GM10248 (cell line): ENCODE measurements at regions of chr12 and their contacts with region 1.

Region 1: DNA sequence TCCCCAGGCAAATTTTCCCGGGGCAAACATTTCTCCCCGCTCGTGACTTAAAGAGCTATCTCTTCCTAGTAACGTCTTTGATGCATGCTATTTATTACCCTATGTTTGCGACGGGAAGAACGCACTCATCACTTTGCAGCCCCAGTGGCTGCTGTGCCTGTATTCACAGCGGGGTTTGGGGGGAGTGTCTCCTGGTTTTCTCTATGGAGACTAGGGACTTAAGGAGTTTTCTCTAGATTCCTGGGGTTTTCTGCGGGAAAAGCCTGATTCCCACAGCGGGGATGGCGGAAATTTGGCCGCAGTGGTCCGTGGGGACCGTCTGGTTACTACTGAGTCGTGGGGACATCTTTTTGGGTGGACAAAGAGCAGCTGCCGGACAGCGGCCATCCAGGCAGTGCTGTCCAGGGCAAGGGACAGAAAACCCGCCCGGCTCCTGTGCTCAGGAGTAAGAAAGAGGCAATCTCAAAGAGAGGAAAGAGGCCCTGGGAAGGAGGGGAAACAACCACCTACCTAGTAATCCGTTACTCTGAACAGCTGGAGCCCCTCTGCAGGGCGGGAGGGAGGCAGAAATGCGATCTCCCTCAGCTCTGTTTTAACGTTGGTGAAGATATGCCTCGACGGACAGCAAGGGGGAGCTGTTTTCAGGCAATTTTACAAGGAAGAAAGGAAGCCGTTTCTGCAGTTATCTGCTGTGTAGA is 771 bp upstream of the AVPR1A start:
- DNase-seq: peak; percentile 48
- CTCF ChIP-seq: peak; percentile 62

Region 2: GRCh38 chr12:63164911-63165310 is 13.1 kb after region 1 on chr12:
- CTCF ChIA-PET with region 1: interaction called, 13 read pairs
- POLR2A ChIA-PET with region 1: no interaction called
- DNase-seq: no peak
- CTCF ChIP-seq: no peak